ENCODE measurements at regions of chr2 and their contacts with region 1.

Region 1: GRCh38 chr2:223944703-223945531 is at the start of gene WDFY1:
- DNase-seq: peak; percentile 84 to 93 (median 88)
- H3K4me3 ChIP-seq: peak within 1 kb of the TSS; percentile 76
- H3K27ac ChIP-seq: peak within 1 kb of the TSS; percentile 81 to 85
- H3K4me1 ChIP-seq: peaks cover 12% of the 10 kb centered on the region
- H3K27me3 ChIP-seq: no peaks in the 10 kb centered on the region
- CTCF ChIP-seq: no peak
- EP300 ChIP-seq: no peak
- POLR2A ChIP-seq: peak; percentile 78
- total RNA-seq, gene WDFY1: 33.4 to 50.1 (median 40.8) TPM

Region 2: GRCh38 chr2:223641097-223641496 is 303.8 kb before region 1 on chr2:
- intact Hi-C with region 1: no loop called
- DNase-seq: no peak
- H3K4me3 ChIP-seq: no peak overlapping the region
- H3K27ac ChIP-seq: no peak overlapping the region
- H3K4me1 ChIP-seq: peaks cover 4% of the 10 kb centered on the region
- H3K27me3 ChIP-seq: no peaks in the 10 kb centered on the region
- CTCF ChIP-seq: no peak
- EP300 ChIP-seq: no peak
- POLR2A ChIP-seq: no peak

Region 3: DNA sequence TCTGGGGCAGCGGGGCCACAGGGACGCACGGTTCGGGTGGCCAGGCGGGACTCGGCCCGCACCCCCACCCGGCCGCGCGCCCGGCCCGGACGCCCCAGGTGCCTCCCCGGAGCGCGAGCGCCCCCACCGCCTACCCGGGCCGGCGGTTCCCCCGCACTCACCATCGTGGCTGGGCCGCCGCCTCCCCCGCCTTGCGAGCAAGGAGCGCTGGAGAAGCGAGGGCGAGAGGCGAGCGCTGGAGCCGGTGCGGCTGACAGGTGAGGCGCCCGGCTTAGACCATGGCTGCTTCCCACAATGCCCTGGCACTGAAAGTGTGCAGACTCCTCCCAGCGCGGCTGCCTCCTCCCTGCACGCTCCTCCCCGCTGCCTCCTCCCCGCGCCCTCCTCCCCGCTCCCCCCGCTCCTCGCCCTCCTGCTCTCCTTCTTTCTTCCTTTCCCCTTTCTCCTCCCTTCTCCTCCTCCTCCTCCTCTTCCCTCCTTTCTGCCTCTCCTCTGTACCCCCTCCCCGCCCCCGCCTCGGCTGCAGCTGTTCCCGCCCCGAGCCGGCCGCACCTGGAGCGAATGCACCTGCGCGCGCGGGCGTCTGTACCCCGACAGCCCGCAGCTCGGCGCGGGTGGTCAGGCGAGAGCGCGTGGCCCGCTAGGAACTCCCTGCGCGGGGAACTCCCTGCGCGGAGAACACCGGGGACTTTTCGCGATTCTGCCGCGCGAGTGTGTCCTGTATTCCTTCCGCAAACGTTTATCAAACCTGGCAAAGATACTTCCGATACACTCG is 107.4 kb before region 1 on chr2 and contains the start of gene AP1S3:
- intact Hi-C with region 1: loop called in 1 of 4 experiments (anchors 5 kb)
- DNase-seq: peak; percentile 46 to 70 (median 60)
- H3K4me3 ChIP-seq: peak within 1 kb of the TSS; percentile 55
- H3K27ac ChIP-seq: peak within 1 kb of the TSS in 1 of 2 donors; percentile 55
- H3K4me1 ChIP-seq: no peaks in the 10 kb centered on the region
- H3K27me3 ChIP-seq: no peaks in the 10 kb centered on the region
- CTCF ChIP-seq: no peak
- EP300 ChIP-seq: no peak
- POLR2A ChIP-seq: no peak
- total RNA-seq, gene AP1S3: 0.60 to 16.8 (median 1.3) TPM

Region 4: GRCh38 chr2:223896833-223897311 is 48.0 kb before region 1 on chr2:
- intact Hi-C with region 1: no loop called
- DNase-seq: no peak
- H3K4me3 ChIP-seq: no peak overlapping the region
- H3K27ac ChIP-seq: no peak overlapping the region
- H3K4me1 ChIP-seq: no peaks in the 10 kb centered on the region
- H3K27me3 ChIP-seq: no peaks in the 10 kb centered on the region
- CTCF ChIP-seq: no peak
- EP300 ChIP-seq: no peak
- POLR2A ChIP-seq: no peak

Measured in ovary (tissue), 10 donors.